AG04450 (cell line): ENCODE measurements at regions of chr15 and their contacts with region 1.

Region 1: DNA sequence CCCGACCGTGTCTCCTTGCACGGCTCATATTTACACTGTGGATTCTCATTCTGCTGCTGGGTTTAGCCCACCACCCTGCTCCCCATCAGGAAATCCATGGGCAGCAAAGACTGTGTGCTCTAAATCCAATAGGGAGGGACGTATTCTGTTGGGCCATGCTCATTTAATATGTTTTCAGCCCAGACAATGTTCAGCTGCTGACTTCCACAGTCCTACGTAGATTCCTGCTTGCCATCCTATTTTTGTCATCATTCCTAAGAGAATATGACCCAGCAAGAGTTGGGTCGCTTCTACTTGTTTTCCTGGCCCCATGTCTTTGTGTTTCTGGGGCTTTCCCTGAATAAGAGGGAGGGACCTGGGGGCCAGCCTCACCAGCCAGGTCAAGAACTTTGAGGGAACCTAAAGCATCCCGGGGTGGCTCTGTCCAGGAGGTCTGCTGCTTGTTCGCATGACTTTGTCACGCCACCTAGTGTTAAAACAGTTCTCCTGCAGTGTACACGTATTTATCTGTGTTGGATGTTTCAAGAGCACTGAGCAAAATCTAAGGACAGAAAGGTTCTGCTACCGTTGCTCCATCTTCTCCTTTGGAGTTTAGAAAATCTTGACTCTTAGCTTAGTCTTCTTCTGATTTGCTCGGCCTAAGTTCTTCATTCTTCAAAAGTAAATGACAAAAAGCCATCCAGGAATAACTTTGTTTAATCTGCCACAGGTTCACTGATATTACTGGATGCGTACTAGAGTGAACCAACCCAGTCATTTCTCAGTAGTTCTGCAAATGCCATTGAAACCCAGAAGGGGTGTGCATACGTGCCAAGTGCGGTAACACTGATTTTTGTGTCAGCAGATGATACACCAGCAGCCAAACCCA is 79.8 kb upstream of the NR2E3 start:
- DNase-seq: peak; percentile 44
- H3K4me3 ChIP-seq: no peak overlapping the region
- H3K27ac ChIP-seq: no peak overlapping the region
- H3K27me3 ChIP-seq: no peaks in the 10 kb centered on the region
- CTCF ChIP-seq: peak; percentile 81

Region 2: GRCh38 chr15:71437404-71438318 is 292.9 kb before region 1 on chr15:
- CTCF ChIA-PET with region 1: no interaction called
- POLR2A ChIA-PET with region 1: no interaction called
- DNase-seq: no peak
- H3K4me3 ChIP-seq: no peak overlapping the region
- H3K27ac ChIP-seq: no peak overlapping the region
- H3K27me3 ChIP-seq: no peaks in the 10 kb centered on the region
- CTCF ChIP-seq: no peak

Region 3: DNA sequence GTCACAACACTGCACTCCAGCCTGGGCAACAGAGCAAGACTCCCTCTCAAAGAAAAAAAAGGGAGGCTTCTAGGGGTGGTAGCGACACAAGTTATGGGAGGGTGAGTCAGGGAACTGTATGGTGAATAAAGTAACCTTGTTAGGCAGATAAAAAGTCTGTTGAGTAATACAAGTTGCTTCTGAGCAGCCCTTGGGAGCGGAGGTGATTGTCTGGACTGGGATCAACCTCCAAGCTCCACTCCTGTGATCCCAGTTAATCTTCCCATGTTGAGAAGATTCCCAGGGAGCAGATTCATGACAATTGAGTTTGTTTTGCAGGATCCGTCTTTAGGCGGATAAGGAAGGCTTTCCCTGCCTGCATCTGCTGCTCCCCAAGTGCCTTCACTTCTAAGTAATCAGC is 279.4 kb before region 1 on chr15:
- CTCF ChIA-PET with region 1: interaction called, 10 read pairs
- POLR2A ChIA-PET with region 1: no interaction called
- DNase-seq: no peak
- H3K4me3 ChIP-seq: no peak overlapping the region
- H3K27ac ChIP-seq: no peak overlapping the region
- H3K27me3 ChIP-seq: no peaks in the 10 kb centered on the region
- CTCF ChIP-seq: no peak

Region 4: DNA sequence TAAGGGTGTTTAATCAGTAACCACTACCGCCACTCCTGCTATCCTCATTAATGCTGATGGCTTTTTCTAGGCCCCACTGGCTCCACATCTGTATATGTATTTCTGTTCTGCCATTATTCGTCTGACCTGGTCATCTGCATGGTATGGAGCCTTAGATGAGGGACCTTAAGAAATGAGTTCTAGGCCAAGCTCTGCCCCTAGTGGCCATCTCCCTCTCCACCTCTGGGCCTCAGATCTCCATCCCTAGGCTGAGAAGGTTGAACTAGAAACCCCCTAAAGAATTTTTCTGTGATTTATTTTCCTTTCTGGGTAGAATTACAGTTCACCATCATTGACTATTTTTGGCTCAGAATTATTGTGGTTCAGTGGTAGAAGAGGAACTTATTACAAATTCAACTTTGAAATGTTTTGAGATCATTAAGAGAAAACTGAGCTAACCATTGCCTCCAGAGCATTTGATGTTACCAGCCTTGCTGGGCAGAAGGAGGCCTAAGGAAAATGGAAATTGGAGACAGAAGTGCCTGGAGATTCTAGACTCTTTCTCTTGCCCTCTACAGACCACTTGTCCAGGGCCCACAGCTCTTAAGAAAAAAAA is 245.3 kb before region 1 on chr15:
- CTCF ChIA-PET with region 1: no interaction called
- POLR2A ChIA-PET with region 1: no interaction called
- DNase-seq: no peak
- H3K4me3 ChIP-seq: no peak overlapping the region
- H3K27ac ChIP-seq: no peak overlapping the region
- H3K27me3 ChIP-seq: no peaks in the 10 kb centered on the region
- CTCF ChIP-seq: peak; percentile 38

Region 5: GRCh38 chr15:71660501-71660900 is 70.0 kb before region 1 on chr15:
- CTCF ChIA-PET with region 1: no interaction called
- POLR2A ChIA-PET with region 1: no interaction called
- DNase-seq: no peak
- H3K4me3 ChIP-seq: no peak overlapping the region
- H3K27ac ChIP-seq: no peak overlapping the region
- H3K27me3 ChIP-seq: no peaks in the 10 kb centered on the region
- CTCF ChIP-seq: no peak

Region 6: GRCh38 chr15:71716990-71717389 is 13.5 kb before region 1 on chr15:
- CTCF ChIA-PET with region 1: interaction called, 19 read pairs
- POLR2A ChIA-PET with region 1: no interaction called
- DNase-seq: no peak
- H3K4me3 ChIP-seq: no peak overlapping the region
- H3K27ac ChIP-seq: peak overlapping the region; percentile 48
- H3K27me3 ChIP-seq: no peaks in the 10 kb centered on the region
- CTCF ChIP-seq: no peak